Spleen (tissue), 13 donors: ENCODE measurements at regions of chr12 and their contacts with region 1.

Region 1: DNA sequence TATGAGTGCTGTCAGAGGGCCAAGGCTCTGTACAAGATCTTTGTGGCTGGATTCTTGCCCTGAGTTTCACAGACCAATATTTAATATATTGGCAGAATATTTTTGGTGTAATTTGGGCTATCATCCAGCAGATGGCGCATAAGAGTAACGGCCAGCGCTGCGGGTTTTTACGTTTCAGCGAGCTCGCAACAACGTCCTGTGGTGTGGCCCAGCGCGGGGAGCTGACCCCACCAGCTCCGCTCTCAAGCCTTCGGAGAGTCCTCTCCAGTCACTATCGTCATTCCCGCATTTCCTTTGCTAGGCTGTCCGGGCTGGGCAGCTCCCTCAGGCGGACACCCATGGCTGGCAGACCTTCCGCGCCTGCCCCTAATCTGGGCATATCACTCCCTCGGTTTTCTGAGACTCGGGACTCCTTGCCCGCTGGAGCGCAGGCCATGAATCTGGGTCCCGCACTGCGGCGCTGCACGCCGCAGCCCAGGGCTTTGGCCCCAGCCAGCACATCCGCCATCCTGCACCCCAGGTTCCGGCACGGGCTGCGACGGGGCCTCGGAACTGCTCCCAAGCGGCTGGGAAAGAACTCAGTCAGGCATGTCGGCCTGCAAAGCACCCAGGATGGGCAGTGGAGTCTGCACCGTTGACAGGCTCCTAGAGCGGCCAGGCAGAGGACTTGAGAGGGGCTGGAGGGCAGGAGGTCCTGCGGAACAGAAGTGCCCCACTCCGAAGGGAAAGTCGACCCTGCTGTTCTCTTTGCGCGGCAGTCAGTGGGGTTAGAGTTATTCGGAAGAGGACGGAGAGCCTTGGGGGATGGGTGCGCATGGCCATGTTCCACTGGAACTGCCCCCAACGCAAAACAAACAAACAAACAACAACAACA is 18.4 kb downstream of the OLR1 start:
- DNase-seq: peak; percentile 91
- H3K4me3 ChIP-seq: peak overlapping the region; percentile 48 to 70 (median 64)
- H3K27ac ChIP-seq: peak overlapping the region; percentile 24 to 86 (median 71)
- H3K4me1 ChIP-seq: peaks cover 4 to 23% (median 16%) of the 10 kb centered on the region in 6 donors
- H3K27me3 ChIP-seq: peaks cover 0 to 19% (median 0%) of the 10 kb centered on the region in 7 donors
- CTCF ChIP-seq: peak; percentile 44 to 86 (median 78)
- POLR2A ChIP-seq: no peak

Region 2: DNA sequence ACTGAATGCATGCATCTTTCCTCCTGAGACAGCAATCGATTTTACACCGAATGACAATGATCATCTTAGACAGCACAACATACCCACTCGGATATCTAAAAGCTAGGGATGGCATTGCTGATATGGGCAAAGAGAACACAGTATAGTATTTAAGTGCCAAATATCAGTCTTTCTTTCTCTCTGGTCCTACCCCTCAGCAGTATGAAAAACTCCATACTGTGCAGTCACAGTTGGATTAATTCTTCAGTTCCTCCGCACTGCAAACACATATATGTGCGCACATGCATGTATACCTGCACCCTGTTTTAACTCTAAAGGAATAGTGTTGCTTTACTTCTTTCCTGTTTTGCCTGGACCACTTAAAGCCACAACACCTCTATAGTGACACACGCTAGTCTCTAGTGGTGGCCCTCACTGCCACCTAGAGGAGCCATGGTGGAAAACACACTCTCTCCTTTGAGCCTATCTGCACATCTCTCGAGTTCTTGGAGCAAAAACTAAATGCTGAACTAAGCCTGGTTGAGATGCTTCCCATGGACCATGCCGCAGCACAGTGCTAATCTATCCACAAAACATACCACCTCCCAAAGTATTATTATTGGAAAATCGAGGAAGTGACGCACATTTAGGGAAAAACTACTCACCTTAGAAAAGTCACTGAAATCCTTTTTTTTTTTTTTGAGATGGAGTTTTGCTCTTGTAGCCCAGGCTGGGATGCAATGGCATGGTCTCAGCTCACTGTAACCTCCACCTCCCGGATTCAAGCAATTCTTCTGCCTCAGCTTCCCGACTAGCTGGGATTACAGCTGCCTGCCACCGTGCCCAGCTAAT is 37.3 kb after region 1 on chr12:
- intact Hi-C with region 1: loop called (anchors 2 kb)
- DNase-seq: no peak
- H3K4me3 ChIP-seq: no peak overlapping the region
- H3K27ac ChIP-seq: no peak overlapping the region
- H3K4me1 ChIP-seq: peaks cover 0 to 24% (median 5%) of the 10 kb centered on the region in 6 donors
- H3K27me3 ChIP-seq: peaks cover 0 to 67% (median 6%) of the 10 kb centered on the region in 7 donors
- CTCF ChIP-seq: peak in 10 of 11 experiments; percentile 41 to 79 (median 69)
- POLR2A ChIP-seq: no peak

Region 3: GRCh38 chr12:10252201-10252600 is 98.7 kb after region 1 on chr12:
- intact Hi-C with region 1: no loop called
- DNase-seq: no peak
- H3K4me3 ChIP-seq: no peak overlapping the region
- H3K27ac ChIP-seq: no peak overlapping the region
- H3K4me1 ChIP-seq: no peaks in the 10 kb centered on the region
- H3K27me3 ChIP-seq: no peaks in the 10 kb centered on the region
- CTCF ChIP-seq: no peak
- POLR2A ChIP-seq: no peak